ENCODE measurements at regions of chr3 and their contacts with region 1.

Region 1: DNA sequence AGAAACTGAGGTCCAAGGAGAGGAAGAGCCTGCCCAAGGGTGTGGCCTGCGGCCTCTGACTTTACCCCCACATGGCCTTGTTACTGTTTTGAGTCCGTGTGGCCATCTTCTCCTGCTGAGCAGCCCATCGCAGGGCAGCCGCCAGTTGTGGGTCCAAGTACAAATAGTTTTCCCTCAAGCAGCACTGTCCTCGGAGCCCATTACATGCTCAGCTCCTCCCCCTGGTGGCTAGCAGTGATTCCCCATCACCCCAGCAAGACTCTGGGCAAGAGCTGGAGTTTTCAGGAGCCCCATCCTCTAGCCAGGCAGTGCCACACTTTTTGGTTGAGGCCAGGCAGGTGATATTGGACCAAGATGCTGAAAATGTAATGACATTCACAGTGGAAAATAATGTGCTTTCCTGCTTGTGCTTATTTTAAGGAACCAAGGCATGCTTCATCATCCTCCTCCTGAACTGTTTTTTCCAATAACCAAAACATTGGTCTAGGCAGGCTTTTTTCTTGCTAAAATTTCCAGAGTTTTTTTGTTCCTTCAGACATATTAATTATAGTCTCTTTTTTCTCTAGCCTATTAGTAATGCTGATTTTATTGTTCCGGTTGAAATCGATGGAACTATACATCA is 23.2 kb upstream of the VILL start:
- DNase-seq: peak; percentile 75
- H3K4me3 Mint-ChIP-seq: no peak overlapping the region
- H3K27ac Mint-ChIP-seq: no peak overlapping the region
- H3K4me1 Mint-ChIP-seq: no peaks in the 10 kb centered on the region
- H3K27me3 Mint-ChIP-seq: no peaks in the 10 kb centered on the region

Region 2: DNA sequence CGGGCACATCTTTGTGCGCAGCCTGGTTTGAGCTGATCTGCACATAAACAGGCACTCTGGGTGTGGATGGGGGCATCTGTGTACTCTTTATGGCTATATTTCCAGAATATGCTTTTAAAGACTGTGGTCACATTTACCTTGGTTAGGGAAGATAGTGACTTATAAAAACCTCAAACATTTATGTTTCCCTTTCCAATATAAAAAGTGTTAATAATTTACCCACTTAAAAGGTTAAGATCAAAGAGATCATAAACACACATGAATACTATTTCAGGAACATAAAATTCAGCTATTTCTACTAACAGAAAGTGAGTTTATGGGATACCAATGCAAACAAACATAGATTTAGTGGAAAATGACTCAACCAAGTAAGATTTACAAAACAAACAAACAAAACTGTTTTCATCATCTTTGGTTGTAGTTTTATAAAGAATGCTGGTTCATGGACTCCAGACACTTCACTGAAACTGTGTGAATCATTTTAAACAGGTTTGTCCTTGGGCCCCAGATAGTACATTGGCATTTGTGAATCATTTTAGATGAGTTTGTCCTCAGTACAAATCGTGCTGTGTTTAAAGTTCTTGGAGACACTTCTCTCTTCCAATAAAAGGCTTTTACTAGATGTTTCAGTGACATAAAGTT is 359.2 kb before region 1 on chr3:
- CTCF ChIA-PET with region 1: no interaction called
- POLR2A ChIA-PET with region 1: no interaction called
- intact Hi-C with region 1: no loop called
- DNase-seq: no peak
- H3K4me3 Mint-ChIP-seq: no peak overlapping the region
- H3K27ac Mint-ChIP-seq: no peak overlapping the region
- H3K4me1 Mint-ChIP-seq: no peaks in the 10 kb centered on the region
- H3K27me3 Mint-ChIP-seq: no peaks in the 10 kb centered on the region

Region 3: GRCh38 chr3:37956723-37957528 is 10.4 kb before region 1 on chr3:
- CTCF ChIA-PET with region 1: interaction called, 11 read pairs
- POLR2A ChIA-PET with region 1: no interaction called
- intact Hi-C with region 1: no loop called
- DNase-seq: no peak
- H3K4me3 Mint-ChIP-seq: no peak overlapping the region
- H3K27ac Mint-ChIP-seq: no peak overlapping the region
- H3K4me1 Mint-ChIP-seq: peaks cover 15% of the 10 kb centered on the region
- H3K27me3 Mint-ChIP-seq: no peaks in the 10 kb centered on the region

Region 4: GRCh38 chr3:37979541-37980461 is 12.4 kb after region 1 on chr3:
- CTCF ChIA-PET with region 1: interaction called, 48 read pairs
- POLR2A ChIA-PET with region 1: interaction called, 5 read pairs
- intact Hi-C with region 1: no loop called
- DNase-seq: no peak
- H3K4me3 Mint-ChIP-seq: no peak overlapping the region
- H3K27ac Mint-ChIP-seq: no peak overlapping the region
- H3K4me1 Mint-ChIP-seq: peaks cover 1% of the 10 kb centered on the region
- H3K27me3 Mint-ChIP-seq: no peaks in the 10 kb centered on the region

Region 5: GRCh38 chr3:38270616-38271015 is 303.2 kb after region 1 on chr3:
- CTCF ChIA-PET with region 1: no interaction called
- POLR2A ChIA-PET with region 1: no interaction called
- intact Hi-C with region 1: no loop called
- DNase-seq: no peak
- H3K4me3 Mint-ChIP-seq: no peak overlapping the region
- H3K27ac Mint-ChIP-seq: no peak overlapping the region
- H3K4me1 Mint-ChIP-seq: peaks cover 12% of the 10 kb centered on the region
- H3K27me3 Mint-ChIP-seq: no peaks in the 10 kb centered on the region

Region 6: DNA sequence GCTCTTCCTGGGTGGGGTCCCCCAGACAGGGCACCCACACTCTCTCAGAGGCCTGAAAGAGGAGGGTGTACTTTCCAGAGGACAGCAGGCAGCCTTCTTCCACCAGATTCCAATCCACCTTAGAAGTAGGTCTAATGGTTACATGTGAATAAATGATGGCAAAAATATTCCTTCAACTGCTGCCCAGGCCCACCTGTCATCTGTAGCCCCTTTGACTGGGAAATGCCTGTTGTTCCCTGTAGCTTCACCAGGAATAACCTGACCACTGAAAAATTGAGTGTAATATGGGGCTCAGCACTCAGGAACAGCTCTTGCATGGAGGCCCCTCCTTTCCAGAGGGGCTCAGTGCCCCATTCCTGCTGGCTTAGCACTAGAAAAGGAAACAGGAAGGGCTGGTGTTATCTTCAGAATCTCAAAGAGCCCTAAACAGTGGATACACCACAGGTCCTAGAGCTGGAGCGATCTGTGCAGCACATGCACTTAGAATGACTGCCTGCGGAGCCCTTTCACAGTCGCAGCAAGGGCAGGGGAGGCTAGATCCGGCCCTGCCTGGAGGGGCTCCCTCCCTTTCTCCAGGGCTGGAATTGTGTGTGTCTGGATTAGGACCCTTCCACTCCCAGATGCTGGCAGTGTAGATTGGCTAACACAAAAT is 346.9 kb after region 1 on chr3:
- CTCF ChIA-PET with region 1: no interaction called
- POLR2A ChIA-PET with region 1: no interaction called
- intact Hi-C with region 1: no loop called
- DNase-seq: no peak
- H3K4me3 Mint-ChIP-seq: no peak overlapping the region
- H3K27ac Mint-ChIP-seq: no peak overlapping the region
- H3K4me1 Mint-ChIP-seq: no peaks in the 10 kb centered on the region
- H3K27me3 Mint-ChIP-seq: peaks cover 1% of the 10 kb centered on the region

Measured in activated CD4-positive, alpha-beta memory T cell treated with anti-CD3 and anti-CD28 coated beads for 36 hours (primary cell).